ENCODE measurements at regions of chr9 and their contacts with region 1.

Region 1: GRCh38 chr9:121399883-121400607 is 30.0 kb upstream of the STOM start:
- DNase-seq: peak; percentile 80
- H3K4me3 ChIP-seq: no peak overlapping the region
- CTCF ChIP-seq: peak; percentile 20

Region 2: DNA sequence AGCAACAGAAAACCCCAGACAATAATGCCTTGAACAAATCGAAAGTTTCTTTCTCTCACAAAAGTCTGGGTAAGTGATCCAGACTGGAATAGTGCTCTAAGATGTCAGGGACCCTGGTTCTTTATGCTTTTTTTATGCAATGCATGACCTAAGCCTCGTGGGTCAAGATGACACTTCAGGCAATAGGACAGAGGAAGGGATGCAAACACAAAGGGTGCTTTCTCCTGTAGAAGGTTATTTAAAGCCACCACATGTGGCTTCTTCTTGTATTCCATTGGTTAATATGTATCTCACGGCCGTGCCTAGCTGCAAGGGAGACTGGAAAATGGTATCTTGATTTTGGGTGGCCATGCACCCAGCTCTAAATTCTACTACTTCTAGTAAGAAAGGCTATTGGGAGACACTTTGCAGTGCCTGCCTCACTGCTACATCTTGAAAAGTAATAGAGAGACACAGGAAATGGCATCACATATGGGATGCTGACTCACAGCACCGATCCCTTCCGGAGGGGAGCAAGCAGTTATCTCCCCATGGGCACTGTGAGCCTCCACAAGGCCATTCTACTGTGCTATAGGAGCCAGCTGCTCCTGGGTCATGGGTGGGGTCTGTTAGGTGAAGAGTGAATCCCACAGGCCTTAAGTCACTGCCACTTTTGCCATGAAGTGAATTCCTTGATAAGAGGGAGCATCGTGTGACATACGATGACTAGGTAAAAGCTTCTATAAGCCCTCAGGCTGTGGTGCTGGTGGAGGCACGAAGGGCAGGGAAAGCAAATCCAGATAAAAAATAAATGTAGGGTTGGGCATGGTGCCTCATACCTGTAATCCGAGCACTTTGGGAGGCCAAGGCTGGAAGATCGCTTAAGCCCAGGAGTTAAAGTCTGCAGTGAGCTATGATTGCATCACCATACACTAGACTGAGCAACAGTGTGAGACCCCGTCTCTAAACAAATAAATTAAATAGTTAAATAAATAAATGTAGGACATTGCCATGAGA is 165.8 kb before region 1 on chr9:
- in situ Hi-C with region 1: loop called (anchors 25 kb)
- DNase-seq: no peak
- H3K4me3 ChIP-seq: no peak overlapping the region
- CTCF ChIP-seq: no peak

Region 3: DNA sequence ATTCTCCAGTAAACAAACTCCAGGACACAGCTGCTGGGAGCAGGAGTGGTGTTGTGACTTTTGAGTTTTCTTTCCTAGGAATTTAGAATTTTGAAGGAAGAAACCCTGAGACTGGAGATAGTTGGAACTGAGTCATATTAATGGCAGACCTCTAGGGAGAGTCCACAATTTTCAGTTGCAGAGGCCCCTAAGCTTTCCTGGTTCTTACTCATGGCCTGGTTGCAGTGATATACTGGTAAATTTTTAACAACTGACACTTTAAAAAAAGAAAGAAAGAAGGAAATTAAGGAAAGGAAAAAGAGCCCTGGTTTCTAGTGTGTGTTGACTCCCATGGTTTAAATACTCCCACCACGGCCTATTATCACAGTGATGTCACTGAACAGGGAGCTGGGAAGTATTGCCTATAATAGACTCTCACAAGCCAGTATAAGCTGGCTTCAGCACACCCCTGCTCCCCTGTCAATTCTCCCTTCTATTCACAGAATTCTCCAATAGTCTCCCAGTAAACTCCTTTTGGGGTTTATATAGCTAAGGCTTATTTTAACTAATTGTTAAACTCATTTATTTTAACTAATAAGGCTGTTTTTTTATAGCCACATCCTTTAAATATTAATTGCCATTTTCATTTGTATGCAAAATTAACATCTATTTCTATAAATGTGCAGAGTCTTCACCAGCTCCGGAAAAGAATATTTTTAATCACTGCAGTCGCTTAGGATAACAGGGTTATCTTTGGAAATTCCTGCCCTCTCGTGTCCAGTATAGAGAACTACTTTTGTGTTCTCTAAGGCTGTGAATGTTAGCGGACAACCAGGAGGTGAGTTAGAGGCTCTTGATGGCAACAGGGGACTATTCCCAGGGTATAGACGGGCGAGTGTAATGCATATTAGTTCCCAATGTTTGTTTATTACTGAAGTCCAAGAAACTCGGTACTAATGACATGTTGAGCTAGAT is 39.9 kb after region 1 on chr9:
- in situ Hi-C with region 1: loop called (anchors 5 kb)
- DNase-seq: no peak
- H3K4me3 ChIP-seq: no peak overlapping the region
- CTCF ChIP-seq: peak; percentile 19